GM12878 (cell line): ENCODE measurements at regions of chr10 and their contacts with region 1.

Region 1: GRCh38 chr10:58919927-58920654 is 256.4 kb upstream of the PHYHIPL start:
- DNase-seq: no peak
- ATAC-seq: peak; percentile 74
- H3K4me3 ChIP-seq: no peak overlapping the region
- H3K27ac ChIP-seq: no peak overlapping the region
- H3K4me1 ChIP-seq: no peaks in the 10 kb centered on the region
- H3K27me3 ChIP-seq: no peaks in the 10 kb centered on the region
- CTCF ChIP-seq: no peak
- EP300 ChIP-seq: no peak
- POLR2A ChIP-seq: no peak
- RAD21 ChIP-seq: no peak

Region 2: GRCh38 chr10:58930500-58930899 is 10.4 kb after region 1 on chr10:
- CTCF ChIA-PET with region 1: interaction called, 5 read pairs
- POLR2A ChIA-PET with region 1: no interaction called
- RAD21 ChIA-PET with region 1: interaction called, 4 read pairs
- SMC1A ChIA-PET with region 1: interaction called, 18 read pairs
- in situ Hi-C with region 1: no loop called
- intact Hi-C with region 1: no loop called
- DNase-seq: no peak
- ATAC-seq: no peak
- H3K4me3 ChIP-seq: no peak overlapping the region
- H3K27ac ChIP-seq: no peak overlapping the region
- H3K4me1 ChIP-seq: no peaks in the 10 kb centered on the region
- H3K27me3 ChIP-seq: no peaks in the 10 kb centered on the region; a peak in 1 of 4 replicates
- CTCF ChIP-seq: no peak
- EP300 ChIP-seq: no peak
- POLR2A ChIP-seq: no peak
- RAD21 ChIP-seq: no peak

Region 3: GRCh38 chr10:58936364-58936763 is 16.3 kb after region 1 on chr10:
- CTCF ChIA-PET with region 1: interaction called, 5 read pairs
- POLR2A ChIA-PET with region 1: no interaction called
- RAD21 ChIA-PET with region 1: interaction called, 4 read pairs
- SMC1A ChIA-PET with region 1: interaction called, 18 read pairs
- in situ Hi-C with region 1: no loop called
- intact Hi-C with region 1: no loop called
- DNase-seq: no peak
- ATAC-seq: no peak
- H3K4me3 ChIP-seq: no peak overlapping the region
- H3K27ac ChIP-seq: no peak overlapping the region
- H3K4me1 ChIP-seq: no peaks in the 10 kb centered on the region
- H3K27me3 ChIP-seq: peaks cover 0 to 2% of the 10 kb centered on the region in 2 experiments; a peak in 3 of 4 replicates
- CTCF ChIP-seq: no peak
- EP300 ChIP-seq: no peak
- POLR2A ChIP-seq: no peak
- RAD21 ChIP-seq: no peak